Right ventricle myocardium inferior (tissue), 1 donor: ENCODE measurements at regions of chr19 and their contacts with region 1.

Region 1: GRCh38 chr19:11924886-11925650 is at the start of gene ZNF700:
- DNase-seq: peak; percentile 96
- ATAC-seq: peak; percentile 99
- total RNA-seq, gene ZNF700: 4.1 TPM

Region 2: DNA sequence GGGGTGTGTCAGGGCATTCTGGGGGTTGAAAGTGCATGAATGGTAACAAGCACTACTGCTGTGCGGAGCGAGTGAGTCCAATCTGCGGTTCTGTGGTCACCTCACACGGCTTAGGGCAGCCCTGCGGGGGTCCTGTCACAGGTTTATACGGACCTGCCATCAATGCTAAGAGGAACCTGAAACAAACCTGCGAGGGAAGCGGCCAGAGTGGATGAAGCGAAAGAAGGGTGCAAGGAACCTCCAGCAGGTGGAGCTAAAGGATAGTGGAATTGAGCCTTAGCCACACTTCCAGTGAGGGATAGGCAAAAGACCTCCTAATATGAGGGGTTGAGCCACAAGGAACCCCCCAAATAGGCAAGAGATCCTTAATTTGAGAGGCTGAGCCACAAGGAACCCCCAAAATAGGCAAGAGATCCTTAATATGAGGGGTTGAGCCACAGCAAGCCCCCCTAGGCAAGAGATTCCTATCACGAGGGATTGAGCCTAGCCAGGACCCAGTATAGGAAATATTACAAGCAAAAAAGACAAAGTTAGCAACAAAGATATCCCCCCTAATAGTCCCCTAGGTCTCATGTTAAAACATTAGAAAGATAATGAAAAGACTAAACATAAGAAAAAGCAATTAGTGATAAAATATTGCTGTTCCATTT is 43.8 kb before region 1 on chr19:
- intact Hi-C with region 1: loop called (anchors 5 kb)
- DNase-seq: no peak
- ATAC-seq: peak; percentile 67

Region 3: DNA sequence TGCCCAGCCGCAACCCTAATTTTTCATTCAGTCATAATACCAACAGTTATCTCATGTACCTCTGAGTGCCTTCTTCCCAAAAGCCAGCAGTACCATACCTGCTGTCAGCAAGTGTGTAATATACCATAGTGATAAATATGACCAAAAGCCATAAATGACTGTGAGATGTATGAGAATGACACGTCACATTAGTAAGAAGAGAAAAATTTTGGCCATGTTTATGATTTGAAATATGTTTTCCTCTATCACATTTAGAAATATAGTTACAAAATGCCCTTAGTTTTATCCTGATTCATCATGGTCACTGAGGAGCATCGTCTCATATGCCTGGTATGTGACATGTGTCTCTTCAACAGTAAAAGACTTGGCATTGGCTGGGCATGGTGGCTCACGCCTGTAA is 11.4 kb before region 1 on chr19:
- intact Hi-C with region 1: no loop called
- DNase-seq: no peak
- ATAC-seq: no peak

Region 4: GRCh38 chr19:11964858-11965645 is 40.0 kb after region 1 on chr19 and contains the start of gene ZNF763:
- intact Hi-C with region 1: loop called (anchors 1 kb)
- DNase-seq: peak; percentile 96
- ATAC-seq: peak; percentile 99
- total RNA-seq, gene ZNF763: 2.6 TPM

Region 5: GRCh38 chr19:11987405-11988281 is 62.6 kb after region 1 on chr19:
- intact Hi-C with region 1: loop called (anchors 1 kb)
- DNase-seq: peak; percentile 98
- ATAC-seq: peak; percentile 99

Region 6: DNA sequence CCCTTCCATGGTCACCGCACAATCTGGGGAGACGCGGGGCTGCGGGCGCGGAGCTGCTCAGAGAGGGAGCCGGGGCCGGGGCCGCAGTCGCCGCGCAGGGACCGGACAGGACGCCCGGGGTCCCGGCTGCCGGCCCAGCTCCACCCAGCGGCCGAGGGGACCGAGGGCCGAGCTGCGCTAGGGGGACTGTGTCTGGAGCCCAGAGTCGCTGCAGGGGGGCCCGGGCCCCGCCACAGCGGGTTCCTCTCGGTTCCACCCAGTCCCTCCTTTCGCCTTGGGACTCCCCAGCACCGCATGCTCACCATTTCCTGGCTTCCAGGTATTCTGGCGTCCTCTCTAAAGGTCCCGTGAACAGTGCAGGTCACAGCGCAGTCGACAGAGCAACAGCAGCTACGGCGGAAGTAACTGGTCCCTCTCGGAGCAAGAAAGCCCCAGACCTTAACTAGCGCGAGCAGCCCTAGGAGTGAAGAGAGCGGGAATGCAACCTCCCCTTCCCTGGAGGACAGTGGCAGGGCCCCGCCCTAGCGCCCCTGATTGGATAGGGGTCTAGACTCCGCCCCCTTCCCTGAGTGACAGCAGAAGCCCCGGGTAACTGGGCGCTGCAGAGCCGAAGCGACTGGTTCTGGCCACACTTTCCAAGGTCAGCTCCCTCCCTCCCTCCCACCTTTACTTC is 127.6 kb after region 1 on chr19 and contains the start of gene ZNF878:
- intact Hi-C with region 1: loop called (anchors 5 kb)
- DNase-seq: peak; percentile 95
- ATAC-seq: peak; percentile 100
- total RNA-seq, gene ZNF878: 0.32 TPM

Region 7: DNA sequence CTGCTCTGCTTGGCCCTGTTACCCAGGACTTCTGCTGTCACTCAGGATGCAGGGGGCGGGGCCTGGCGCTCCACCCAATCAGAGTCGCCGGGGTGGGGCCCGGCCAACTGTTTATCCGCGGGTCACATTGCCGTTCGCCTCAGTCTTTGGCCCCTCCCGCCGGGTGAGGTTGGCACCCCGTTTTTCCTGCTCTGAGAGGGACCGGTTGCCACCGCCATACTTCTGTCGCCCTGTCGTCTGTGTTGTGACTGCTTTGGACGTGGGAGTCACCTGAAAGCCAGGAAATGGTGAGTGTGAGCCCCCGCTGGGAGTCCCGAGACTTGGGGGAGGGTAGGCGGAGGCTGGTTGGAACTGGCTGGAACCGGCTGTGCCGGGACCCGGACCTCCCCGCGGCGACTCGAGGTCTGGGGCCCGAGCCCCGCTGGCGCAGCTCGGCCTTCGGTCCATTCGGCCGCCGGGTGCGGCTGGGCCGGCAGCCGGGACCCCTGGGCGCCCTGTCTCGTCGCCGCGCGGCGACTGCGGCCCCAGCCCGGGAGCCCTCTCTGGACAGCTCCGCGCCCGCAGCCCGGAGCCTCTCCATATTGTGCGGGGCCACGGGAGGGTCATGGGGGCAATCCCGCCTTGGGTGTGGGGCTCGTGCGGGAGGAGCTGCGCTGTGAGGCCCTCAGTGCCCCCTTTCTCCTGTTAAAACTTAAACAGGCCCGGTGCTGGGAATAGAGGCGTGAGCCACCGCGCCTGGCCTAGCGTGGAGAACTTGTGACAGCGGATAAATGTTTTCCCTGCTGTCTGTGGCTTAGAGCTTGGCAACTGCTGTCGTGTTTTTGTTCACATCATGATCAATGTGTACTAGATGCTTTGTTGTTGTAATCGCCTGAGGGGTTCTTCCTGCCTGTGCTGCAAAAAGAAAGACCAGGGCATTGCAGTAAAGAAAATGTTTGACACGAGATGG is 139.8 kb after region 1 on chr19 and contains the start of gene ZNF844:
- intact Hi-C with region 1: no loop called
- DNase-seq: peak; percentile 98
- ATAC-seq: peak; percentile 99
- total RNA-seq, gene ZNF844: 14.3 TPM

Region 8: GRCh38 chr19:12112701-12113100 is 187.6 kb after region 1 on chr19:
- intact Hi-C with region 1: no loop called
- DNase-seq: no peak
- ATAC-seq: no peak

Region 9: GRCh38 chr19:12139885-12140547 is 214.9 kb after region 1 on chr19 and contains the start of gene ZNF20:
- intact Hi-C with region 1: loop called (anchors 1 kb)
- DNase-seq: peak; percentile 97
- ATAC-seq: peak; percentile 99
- total RNA-seq, gene ZNF20: 1.1 TPM